MCF 10A (cell line): ENCODE measurements at regions of chr22 and their contacts with region 1.

Region 1: GRCh38 chr22:36856121-36856791 is 4.5 kb upstream of the NCF4 start:
- DNase-seq: peak; percentile 87
- H3K4me3 Mint-ChIP-seq: peak overlapping the region; percentile 2
- H3K27ac Mint-ChIP-seq: no peak overlapping the region
- H3K4me1 Mint-ChIP-seq: peaks cover 14% of the 10 kb centered on the region
- H3K27me3 Mint-ChIP-seq: peaks cover 28% of the 10 kb centered on the region
- CTCF ChIP-seq: peak; percentile 100

Region 2: GRCh38 chr22:36546092-36546804 is 310.0 kb before region 1 on chr22:
- CTCF ChIA-PET with region 1: interaction called, 43 read pairs
- POLR2A ChIA-PET with region 1: no interaction called
- intact Hi-C with region 1: no loop called
- DNase-seq: peak; percentile 54
- H3K4me3 Mint-ChIP-seq: no peak overlapping the region
- H3K27ac Mint-ChIP-seq: no peak overlapping the region
- H3K4me1 Mint-ChIP-seq: peaks cover 22% of the 10 kb centered on the region
- H3K27me3 Mint-ChIP-seq: peaks cover 17% of the 10 kb centered on the region
- CTCF ChIP-seq: peak; percentile 78

Region 3: DNA sequence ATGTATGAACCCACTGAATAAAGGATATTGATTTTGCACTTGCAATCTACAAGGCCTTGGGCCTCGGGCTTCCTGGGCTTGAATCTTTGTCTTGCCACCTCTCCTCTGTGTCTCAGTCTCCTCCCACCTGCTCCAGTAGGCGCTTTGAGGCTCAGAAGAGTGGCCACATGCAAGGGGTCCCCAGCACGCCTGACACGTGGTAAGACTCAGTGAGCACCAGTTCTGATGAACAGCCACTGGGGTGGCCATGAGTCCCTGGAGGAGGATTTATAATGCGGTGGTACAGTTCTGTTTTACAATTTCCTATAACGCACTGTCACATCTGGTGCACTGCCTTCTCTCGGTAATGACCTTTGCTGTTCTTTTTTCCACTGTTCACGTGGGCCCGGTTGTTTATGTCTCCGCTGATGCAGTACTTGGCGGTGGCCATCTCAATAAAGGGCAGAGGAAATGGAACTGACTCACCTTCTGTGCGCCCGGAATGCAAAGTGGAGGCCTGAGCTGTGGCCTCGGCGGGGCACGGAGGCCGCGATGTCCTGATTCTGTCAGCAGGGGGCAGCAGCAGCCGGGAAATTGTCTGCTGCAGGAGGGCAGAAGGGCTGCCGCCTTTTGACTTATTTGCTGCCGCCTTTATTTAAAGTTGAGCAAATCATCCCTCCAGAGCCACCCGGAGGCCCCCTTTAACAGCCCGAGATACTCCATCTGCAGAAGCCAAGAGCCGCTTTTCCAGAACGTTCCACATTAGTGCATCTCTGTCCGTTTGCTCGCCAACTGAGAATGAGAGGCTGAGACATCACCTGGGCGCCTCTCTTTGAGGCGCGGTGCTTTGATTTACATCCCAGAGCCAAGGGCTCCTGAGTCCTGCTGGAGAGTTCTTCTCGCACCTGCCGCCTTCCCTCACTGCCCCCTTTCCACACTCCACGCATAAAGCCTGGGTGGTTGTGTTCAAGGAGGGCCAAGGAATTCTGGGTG is 74.3 kb before region 1 on chr22:
- CTCF ChIA-PET with region 1: interaction called, 55 read pairs
- POLR2A ChIA-PET with region 1: interaction called, 3 read pairs
- intact Hi-C with region 1: loop called (anchors 1 kb)
- DNase-seq: peak; percentile 86
- H3K4me3 Mint-ChIP-seq: no peak overlapping the region
- H3K27ac Mint-ChIP-seq: no peak overlapping the region
- H3K4me1 Mint-ChIP-seq: peaks cover 8% of the 10 kb centered on the region
- H3K27me3 Mint-ChIP-seq: peaks cover 32% of the 10 kb centered on the region
- CTCF ChIP-seq: peak; percentile 84

Region 4: GRCh38 chr22:36833073-36833472 is 23.2 kb before region 1 on chr22:
- CTCF ChIA-PET with region 1: interaction called, 20 read pairs
- POLR2A ChIA-PET with region 1: no interaction called
- intact Hi-C with region 1: no loop called
- DNase-seq: no peak
- H3K4me3 Mint-ChIP-seq: no peak overlapping the region
- H3K27ac Mint-ChIP-seq: no peak overlapping the region
- H3K4me1 Mint-ChIP-seq: no peaks in the 10 kb centered on the region
- H3K27me3 Mint-ChIP-seq: peaks cover 23% of the 10 kb centered on the region
- CTCF ChIP-seq: no peak

Region 5: GRCh38 chr22:36873680-36874537 is 17.7 kb after region 1 on chr22:
- CTCF ChIA-PET with region 1: interaction called, 93 read pairs
- POLR2A ChIA-PET with region 1: interaction called, 5 read pairs
- intact Hi-C with region 1: no loop called
- DNase-seq: peak; percentile 97
- H3K4me3 Mint-ChIP-seq: peak overlapping the region; percentile 29
- H3K27ac Mint-ChIP-seq: peak overlapping the region; percentile 90
- H3K4me1 Mint-ChIP-seq: peaks cover 29% of the 10 kb centered on the region
- H3K27me3 Mint-ChIP-seq: peaks cover 31% of the 10 kb centered on the region
- CTCF ChIP-seq: peak; percentile 51

Region 6: GRCh38 chr22:37043828-37044538 is 187.7 kb after region 1 on chr22:
- CTCF ChIA-PET with region 1: interaction called, 5 read pairs
- POLR2A ChIA-PET with region 1: no interaction called
- intact Hi-C with region 1: loop called (anchors 2 kb)
- DNase-seq: peak; percentile 79
- H3K4me3 Mint-ChIP-seq: no peak overlapping the region
- H3K27ac Mint-ChIP-seq: no peak overlapping the region
- H3K4me1 Mint-ChIP-seq: peaks cover 7% of the 10 kb centered on the region
- H3K27me3 Mint-ChIP-seq: no peaks in the 10 kb centered on the region
- CTCF ChIP-seq: peak; percentile 75